T-cell (primary cell): ENCODE measurements at regions of chr1 and their contacts with region 1.

Region 1: GRCh38 chr1:204806943-204807687 is 63.5 kb upstream of the NFASC start:
- DNase-seq: peak; percentile 56 to 90 (median 78)
- ATAC-seq: peak; percentile 95 to 97 (median 95)
- H3K4me3 ChIP-seq: peak overlapping the region; percentile 51 to 83
- H3K4me3 Mint-ChIP-seq: peak overlapping the region; percentile 79 to 89 (median 89)
- H3K27ac ChIP-seq: no peak overlapping the region
- H3K27ac Mint-ChIP-seq: peak overlapping the region; percentile 30 to 58
- H3K4me1 ChIP-seq: peaks cover 8 to 23% of the 10 kb centered on the region in 2 experiments
- H3K4me1 Mint-ChIP-seq: peaks cover 13 to 16% (median 15%) of the 10 kb centered on the region in 3 donors
- H3K27me3 ChIP-seq: no peaks in the 10 kb centered on the region
- H3K27me3 Mint-ChIP-seq: no peaks in the 10 kb centered on the region

Region 2: DNA sequence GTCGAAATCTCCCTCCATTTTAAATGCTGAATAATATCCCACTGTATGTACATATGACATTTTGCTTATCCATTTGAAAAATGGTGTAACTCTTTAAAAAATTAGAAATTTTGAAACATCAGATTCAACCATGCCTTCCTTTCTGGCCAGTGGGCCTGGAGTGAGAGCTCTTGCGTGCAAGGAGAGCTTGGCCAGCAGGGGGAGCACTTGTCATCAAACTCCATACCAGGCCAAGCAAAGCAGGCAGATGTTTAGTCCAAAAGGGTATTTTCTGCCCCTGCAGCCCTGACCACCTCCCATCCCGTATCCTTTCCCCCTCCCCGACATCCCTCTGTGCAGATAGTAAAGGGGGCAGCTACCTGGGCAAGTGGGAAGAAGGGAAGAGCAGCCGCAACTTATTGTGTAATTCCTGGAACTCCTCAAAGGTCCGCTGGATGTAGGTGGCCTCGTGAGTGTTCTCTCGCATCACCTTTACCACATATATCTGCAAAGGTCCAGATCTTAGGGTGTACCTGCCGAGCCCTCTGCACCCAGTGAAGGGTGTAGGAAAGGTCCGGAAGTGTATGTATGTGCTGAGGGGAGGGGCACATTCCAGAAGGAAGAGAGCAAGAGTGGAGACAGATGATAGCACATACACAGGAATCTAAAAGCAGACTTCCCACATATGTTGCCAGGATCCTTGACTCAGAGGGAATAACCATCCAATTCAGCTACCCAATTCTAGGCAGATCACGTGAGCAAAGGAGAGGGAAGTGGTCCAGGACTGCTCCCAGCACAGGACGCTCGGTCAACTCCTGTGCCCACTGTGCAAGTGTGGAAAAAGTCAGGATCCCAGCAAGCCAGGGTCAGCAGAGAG is 375.6 kb before region 1 on chr1:
- CTCF ChIA-PET with region 1: interaction called in 1 of 2 experiments, 12 read pairs
- POLR2A ChIA-PET with region 1: no interaction called
- DNase-seq: peak; percentile 31 to 90 (median 71)
- ATAC-seq: peak; percentile 76 to 86 (median 78)
- H3K4me3 ChIP-seq: no peak overlapping the region
- H3K4me3 Mint-ChIP-seq: no peak overlapping the region
- H3K27ac ChIP-seq: no peak overlapping the region
- H3K27ac Mint-ChIP-seq: peak overlapping the region in 1 of 2 donors; percentile 12
- H3K4me1 ChIP-seq: no peaks in the 10 kb centered on the region
- H3K4me1 Mint-ChIP-seq: peaks cover 2 to 8% (median 6%) of the 10 kb centered on the region in 3 donors
- H3K27me3 ChIP-seq: no peaks in the 10 kb centered on the region
- H3K27me3 Mint-ChIP-seq: no peaks in the 10 kb centered on the region

Region 3: GRCh38 chr1:204565617-204566582 is 241.2 kb before region 1 on chr1:
- CTCF ChIA-PET with region 1: interaction called, 3 to 33 read pairs
- POLR2A ChIA-PET with region 1: no interaction called
- DNase-seq: peak in 34 of 35 experiments; percentile 29 to 81 (median 54)
- ATAC-seq: peak; percentile 79 to 90 (median 84)
- H3K4me3 ChIP-seq: no peak overlapping the region
- H3K4me3 Mint-ChIP-seq: peak overlapping the region in 1 of 3 donors; percentile 26
- H3K27ac ChIP-seq: peak overlapping the region; percentile 11
- H3K27ac Mint-ChIP-seq: peak overlapping the region; percentile 70 to 81
- H3K4me1 ChIP-seq: peaks cover 7 to 41% of the 10 kb centered on the region in 2 experiments
- H3K4me1 Mint-ChIP-seq: peaks cover 49 to 62% (median 52%) of the 10 kb centered on the region in 3 donors
- H3K27me3 ChIP-seq: no peaks in the 10 kb centered on the region
- H3K27me3 Mint-ChIP-seq: no peaks in the 10 kb centered on the region

Region 4: DNA sequence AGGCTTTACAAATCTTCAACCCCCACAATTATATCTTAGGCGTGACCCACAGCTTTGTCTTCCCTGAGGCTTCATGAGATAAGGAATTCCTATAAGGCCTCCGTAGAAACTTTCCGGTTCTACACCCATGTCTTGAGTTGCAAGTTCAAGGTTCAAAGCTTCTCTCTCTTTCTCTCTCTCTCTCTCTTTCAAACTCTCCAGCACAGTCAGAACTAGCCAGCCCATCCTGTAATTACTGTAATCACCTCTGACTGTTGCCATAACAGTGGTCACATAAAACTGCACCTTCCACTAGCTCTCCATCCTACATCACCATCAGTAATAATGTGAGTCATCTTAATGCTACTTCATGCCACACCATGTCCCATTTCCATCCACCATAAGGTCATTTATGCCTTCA is 26.5 kb before region 1 on chr1:
- CTCF ChIA-PET with region 1: no interaction called
- POLR2A ChIA-PET with region 1: no interaction called
- DNase-seq: no peak
- ATAC-seq: no peak
- H3K4me3 ChIP-seq: no peak overlapping the region
- H3K4me3 Mint-ChIP-seq: no peak overlapping the region
- H3K27ac ChIP-seq: no peak overlapping the region
- H3K27ac Mint-ChIP-seq: no peak overlapping the region
- H3K4me1 ChIP-seq: no peaks in the 10 kb centered on the region
- H3K4me1 Mint-ChIP-seq: no peaks in the 10 kb centered on the region
- H3K27me3 ChIP-seq: peaks cover 0 to 7% of the 10 kb centered on the region in 2 experiments
- H3K27me3 Mint-ChIP-seq: peaks cover 12 to 18% of the 10 kb centered on the region in 2 donors

Region 5: GRCh38 chr1:204791453-204792353 is 15.4 kb before region 1 on chr1:
- CTCF ChIA-PET with region 1: interaction called, 8 to 35 read pairs
- POLR2A ChIA-PET with region 1: interaction called in 1 of 2 experiments, 3 read pairs
- DNase-seq: peak; percentile 48 to 87 (median 77)
- ATAC-seq: peak; percentile 76 to 93 (median 78)
- H3K4me3 ChIP-seq: no peak overlapping the region
- H3K4me3 Mint-ChIP-seq: no peak overlapping the region
- H3K27ac ChIP-seq: no peak overlapping the region
- H3K27ac Mint-ChIP-seq: no peak overlapping the region
- H3K4me1 ChIP-seq: no peaks in the 10 kb centered on the region
- H3K4me1 Mint-ChIP-seq: peaks cover 0 to 9% (median 5%) of the 10 kb centered on the region in 3 donors
- H3K27me3 ChIP-seq: peaks cover 0 to 26% of the 10 kb centered on the region in 2 experiments
- H3K27me3 Mint-ChIP-seq: peaks cover 29 to 34% of the 10 kb centered on the region in 2 donors

Region 6: GRCh38 chr1:204817341-204817740 is 10.2 kb after region 1 on chr1:
- CTCF ChIA-PET with region 1: interaction called, 4 to 16 read pairs
- POLR2A ChIA-PET with region 1: no interaction called
- DNase-seq: no peak
- ATAC-seq: no peak
- H3K4me3 ChIP-seq: no peak overlapping the region
- H3K4me3 Mint-ChIP-seq: no peak overlapping the region
- H3K27ac ChIP-seq: no peak overlapping the region
- H3K27ac Mint-ChIP-seq: no peak overlapping the region
- H3K4me1 ChIP-seq: no peaks in the 10 kb centered on the region
- H3K4me1 Mint-ChIP-seq: no peaks in the 10 kb centered on the region
- H3K27me3 ChIP-seq: peaks cover 0 to 26% of the 10 kb centered on the region in 2 experiments
- H3K27me3 Mint-ChIP-seq: peaks cover 25 to 26% of the 10 kb centered on the region in 2 donors